ENCODE measurements at regions of chr12 and their contacts with region 1.

Region 1: DNA sequence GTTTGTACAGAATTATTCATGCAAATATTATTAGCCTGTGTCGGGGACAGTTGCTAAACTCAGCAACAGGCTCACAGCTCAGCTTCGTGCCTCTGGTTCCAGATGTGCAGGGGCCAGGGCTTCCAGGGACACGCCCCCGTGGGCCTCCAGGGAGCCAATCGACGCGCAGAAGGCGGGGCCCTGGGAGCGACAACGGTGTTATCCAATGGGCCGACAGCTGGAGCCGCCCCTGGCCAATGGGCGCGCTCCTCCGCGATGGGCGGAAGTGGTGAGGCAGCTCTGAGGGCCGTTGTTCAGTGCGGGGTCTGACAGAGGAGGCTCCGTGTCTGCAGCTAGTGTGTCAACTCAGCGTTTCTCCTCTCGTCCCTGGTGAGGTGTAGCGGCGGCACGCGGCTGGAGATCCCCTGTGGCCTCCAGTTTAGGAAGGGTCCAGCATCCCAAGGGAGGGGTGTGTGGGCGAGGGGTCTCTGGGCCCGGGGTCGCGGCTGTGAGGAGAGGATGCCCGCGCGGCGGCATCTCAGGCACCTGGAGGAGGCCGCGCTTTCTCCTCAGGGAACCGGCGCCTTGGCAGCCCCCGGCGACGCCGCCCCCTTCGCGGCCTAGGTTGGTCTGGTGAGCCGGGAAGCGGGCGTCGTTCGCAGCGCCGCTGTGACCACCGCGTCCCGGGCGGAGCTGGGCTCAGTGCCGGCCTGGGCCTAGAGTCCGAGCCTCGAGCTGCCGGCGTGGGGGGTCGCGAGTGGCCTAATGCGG is at the start of gene TRAFD1:
- DNase-seq: peak; percentile 95 to 100 (median 98)

Region 2: DNA sequence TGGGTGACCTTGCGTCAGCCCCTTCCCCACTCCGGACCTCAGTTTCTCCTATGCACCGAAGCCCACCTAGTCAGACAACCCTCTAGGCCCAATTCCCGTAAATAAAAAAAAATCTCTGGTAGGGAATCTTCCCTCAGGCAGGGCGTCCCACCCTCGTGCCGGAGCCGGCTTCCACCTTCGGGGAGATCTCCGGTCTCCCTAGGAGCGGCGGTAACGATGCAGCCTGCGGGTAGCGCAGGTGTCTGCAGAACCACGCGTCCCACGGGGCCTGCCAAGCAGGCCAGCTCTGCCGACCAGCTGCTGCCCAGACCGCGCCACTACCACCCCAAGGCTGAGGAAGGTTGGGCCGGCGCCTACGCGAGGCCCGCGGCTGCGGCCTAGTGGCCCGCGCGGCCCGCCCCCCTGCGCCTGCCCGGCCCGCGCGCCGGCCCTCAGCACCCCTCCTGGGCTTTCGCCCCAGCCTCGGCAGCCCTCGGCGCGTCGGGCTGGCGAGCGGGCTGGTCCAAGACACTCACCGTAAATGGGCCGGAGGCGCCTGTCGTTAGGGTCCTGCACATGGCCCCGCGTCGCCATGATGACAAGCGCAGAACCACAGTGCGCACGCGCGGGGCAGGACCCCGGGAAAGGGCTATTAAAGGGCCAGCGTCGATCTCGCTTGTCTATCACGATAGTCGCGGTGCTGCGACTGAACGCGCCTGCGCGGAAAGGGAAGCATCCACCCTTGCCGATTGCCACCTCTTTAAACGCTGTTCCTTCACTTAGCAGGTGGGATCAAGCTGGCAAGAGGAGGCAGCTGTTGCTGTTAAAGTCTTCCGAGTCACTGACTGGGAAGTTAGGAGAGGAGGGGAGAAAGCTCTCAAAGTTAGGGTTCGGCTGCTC is 17.0 kb before region 1 on chr12 and contains the start of gene NAA25:
- intact Hi-C with region 1: loop called (anchors 1 kb)
- DNase-seq: peak; percentile 75 to 95 (median 90)

Region 3: DNA sequence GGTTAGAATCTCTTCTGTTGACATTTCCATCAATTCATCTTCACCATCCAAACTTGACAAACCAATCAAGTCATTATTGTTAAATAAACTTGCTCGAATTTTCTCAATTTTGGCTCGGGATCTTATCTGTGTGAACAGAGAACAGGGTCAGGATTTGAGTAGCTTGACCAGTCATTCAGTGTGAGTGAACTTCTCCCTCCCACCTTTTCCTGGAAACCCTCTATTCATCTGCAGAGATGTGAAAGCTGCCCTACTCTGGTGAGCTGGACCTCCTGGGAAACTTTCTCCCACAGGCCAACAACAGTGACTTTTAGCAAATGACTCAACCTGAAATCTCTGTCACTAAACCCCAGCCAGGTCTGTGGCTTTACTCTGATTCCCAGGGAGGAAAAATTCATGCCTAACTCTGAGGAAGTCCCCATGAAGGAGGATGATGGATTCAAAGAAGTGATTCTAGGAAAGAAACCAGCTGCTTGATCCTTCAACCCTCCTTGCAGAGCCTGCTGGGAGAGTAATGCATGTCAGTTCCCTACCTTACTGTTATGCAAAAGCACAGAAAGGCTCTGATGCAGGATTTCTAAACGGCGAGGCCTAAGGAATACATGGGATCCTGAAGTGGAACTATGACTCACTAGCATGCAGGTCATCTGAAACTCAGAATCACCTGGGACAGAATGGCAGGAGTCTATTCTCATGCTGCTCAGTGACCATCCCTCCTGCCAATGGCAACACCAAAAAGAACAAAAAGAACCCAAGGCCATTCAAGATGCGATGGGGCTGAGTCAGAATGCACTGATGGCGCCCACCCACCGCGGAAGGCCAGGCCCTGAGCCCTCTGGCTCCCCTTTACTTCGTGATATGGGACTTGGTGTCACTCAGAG is 58.0 kb after region 1 on chr12:
- intact Hi-C with region 1: loop called (anchors 10 kb)
- DNase-seq: peak in 5 of 42 donors; percentile 31 to 68 (median 38)

Region 4: GRCh38 chr12:112382232-112382796 is 256.9 kb after region 1 on chr12 and contains the start of gene HECTD4:
- intact Hi-C with region 1: loop called (anchors 10 kb)
- DNase-seq: peak; percentile 94 to 100 (median 98)

Measured in head of caudate nucleus (tissue), 42 donors.